CD4-positive, alpha-beta memory T cell (primary cell): ENCODE measurements at regions of chr12 and their contacts with region 1.

Region 1: DNA sequence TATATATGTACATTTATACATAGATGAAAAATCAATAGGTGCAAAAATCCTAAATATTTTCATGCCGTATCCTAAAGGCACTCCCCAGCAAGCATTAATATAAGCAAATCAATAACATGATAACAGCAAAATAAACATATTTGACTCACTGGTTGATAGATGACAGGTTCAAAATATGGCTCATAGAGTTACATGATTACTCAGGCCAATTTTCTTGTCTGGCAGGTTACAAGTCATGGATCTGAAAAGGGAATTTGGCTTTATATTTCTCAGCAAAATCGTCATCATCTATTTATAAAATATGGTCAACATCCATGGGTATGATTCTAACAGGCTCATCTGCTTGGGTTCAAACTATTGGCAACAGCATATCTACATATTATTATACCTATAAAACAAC is 34.9 kb upstream of the SYT1 start:
- DNase-seq: no peak
- H3K4me3 ChIP-seq: no peak overlapping the region
- H3K4me3 Mint-ChIP-seq: no peak overlapping the region
- H3K27ac ChIP-seq: no peak overlapping the region
- H3K27ac Mint-ChIP-seq: no peak overlapping the region
- H3K4me1 ChIP-seq: no peaks in the 10 kb centered on the region
- H3K4me1 Mint-ChIP-seq: no peaks in the 10 kb centered on the region
- H3K27me3 ChIP-seq: no peaks in the 10 kb centered on the region
- H3K27me3 Mint-ChIP-seq: no peaks in the 10 kb centered on the region

Region 2: GRCh38 chr12:78725951-78726580 is 103.6 kb before region 1 on chr12:
- CTCF ChIA-PET with region 1: no interaction called
- POLR2A ChIA-PET with region 1: no interaction called
- intact Hi-C with region 1: no loop called
- DNase-seq: no peak
- H3K4me3 ChIP-seq: no peak overlapping the region
- H3K4me3 Mint-ChIP-seq: no peak overlapping the region
- H3K27ac ChIP-seq: no peak overlapping the region
- H3K27ac Mint-ChIP-seq: no peak overlapping the region
- H3K4me1 ChIP-seq: no peaks in the 10 kb centered on the region
- H3K4me1 Mint-ChIP-seq: no peaks in the 10 kb centered on the region
- H3K27me3 ChIP-seq: no peaks in the 10 kb centered on the region
- H3K27me3 Mint-ChIP-seq: no peaks in the 10 kb centered on the region

Region 3: GRCh38 chr12:78793960-78794359 is 35.7 kb before region 1 on chr12:
- CTCF ChIA-PET with region 1: no interaction called
- POLR2A ChIA-PET with region 1: no interaction called
- intact Hi-C with region 1: loop called (anchors 1 kb)
- DNase-seq: no peak
- H3K4me3 ChIP-seq: no peak overlapping the region
- H3K4me3 Mint-ChIP-seq: no peak overlapping the region
- H3K27ac ChIP-seq: no peak overlapping the region
- H3K27ac Mint-ChIP-seq: no peak overlapping the region
- H3K4me1 ChIP-seq: no peaks in the 10 kb centered on the region
- H3K4me1 Mint-ChIP-seq: no peaks in the 10 kb centered on the region
- H3K27me3 ChIP-seq: no peaks in the 10 kb centered on the region
- H3K27me3 Mint-ChIP-seq: no peaks in the 10 kb centered on the region

Region 4: GRCh38 chr12:78977304-78977867 is 147.7 kb after region 1 on chr12:
- CTCF ChIA-PET with region 1: no interaction called
- POLR2A ChIA-PET with region 1: no interaction called
- intact Hi-C with region 1: no loop called
- DNase-seq: no peak
- H3K4me3 ChIP-seq: no peak overlapping the region
- H3K4me3 Mint-ChIP-seq: no peak overlapping the region
- H3K27ac ChIP-seq: no peak overlapping the region
- H3K27ac Mint-ChIP-seq: no peak overlapping the region
- H3K4me1 ChIP-seq: no peaks in the 10 kb centered on the region
- H3K4me1 Mint-ChIP-seq: no peaks in the 10 kb centered on the region
- H3K27me3 ChIP-seq: no peaks in the 10 kb centered on the region
- H3K27me3 Mint-ChIP-seq: no peaks in the 10 kb centered on the region

Region 5: DNA sequence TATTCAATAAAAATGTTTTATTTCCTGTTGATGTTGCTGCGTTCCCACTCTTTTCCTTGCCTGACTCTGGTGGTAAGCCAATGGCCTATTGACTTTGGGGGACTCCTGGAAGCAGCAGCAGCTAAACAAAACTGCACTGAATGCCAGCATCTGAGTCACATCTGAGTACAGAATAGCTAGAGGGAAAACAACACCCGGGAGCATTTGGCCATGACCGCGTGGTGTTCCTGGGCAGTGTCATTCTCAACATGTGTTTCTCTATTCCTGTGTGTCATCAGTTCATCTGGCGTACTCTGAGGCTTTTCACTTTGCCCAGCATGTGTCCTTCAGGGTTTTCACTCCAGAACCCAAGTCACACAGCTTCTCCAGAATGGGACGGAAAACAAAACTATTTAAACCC is 622.3 kb after region 1 on chr12:
- CTCF ChIA-PET with region 1: no interaction called
- POLR2A ChIA-PET with region 1: no interaction called
- intact Hi-C with region 1: no loop called
- DNase-seq: no peak
- H3K4me3 ChIP-seq: no peak overlapping the region
- H3K4me3 Mint-ChIP-seq: no peak overlapping the region
- H3K27ac ChIP-seq: no peak overlapping the region
- H3K27ac Mint-ChIP-seq: no peak overlapping the region
- H3K4me1 ChIP-seq: no peaks in the 10 kb centered on the region
- H3K4me1 Mint-ChIP-seq: no peaks in the 10 kb centered on the region
- H3K27me3 ChIP-seq: no peaks in the 10 kb centered on the region
- H3K27me3 Mint-ChIP-seq: no peaks in the 10 kb centered on the region